ENCODE measurements at regions of chr7 and their contacts with region 1.

Region 1: DNA sequence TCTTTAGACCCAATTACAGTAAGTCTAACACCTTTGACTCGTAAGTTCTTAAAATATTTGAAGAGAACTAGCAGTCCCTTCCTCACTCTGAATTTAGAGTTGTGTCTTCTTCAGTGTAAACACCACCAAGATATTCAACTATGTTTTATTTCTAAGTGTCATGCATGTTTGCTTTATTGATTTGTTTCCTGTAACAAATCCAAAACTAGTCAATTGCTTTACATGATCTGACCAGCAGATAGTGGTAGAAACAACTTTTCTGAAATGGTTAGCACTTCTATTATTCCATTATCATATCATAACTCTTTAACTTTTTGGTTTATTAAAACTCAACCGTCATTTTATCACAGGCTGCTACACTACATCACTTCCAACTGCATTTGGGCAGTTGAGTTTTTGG is 90.1 kb downstream of the INHBA start:
- DNase-seq: no peak
- ATAC-seq: no peak
- H3K4me3 Mint-ChIP-seq: no peak overlapping the region
- H3K27ac Mint-ChIP-seq: no peak overlapping the region
- H3K4me1 Mint-ChIP-seq: peaks cover 15% of the 10 kb centered on the region
- H3K27me3 Mint-ChIP-seq: no peaks in the 10 kb centered on the region
- CTCF ChIP-seq: no peak

Region 2: GRCh38 chr7:41306486-41306885 is 306.3 kb before region 1 on chr7:
- CTCF ChIA-PET with region 1: no interaction called
- POLR2A ChIA-PET with region 1: no interaction called
- DNase-seq: no peak
- ATAC-seq: no peak
- H3K4me3 Mint-ChIP-seq: no peak overlapping the region
- H3K27ac Mint-ChIP-seq: no peak overlapping the region
- H3K4me1 Mint-ChIP-seq: peaks cover 1% of the 10 kb centered on the region
- H3K27me3 Mint-ChIP-seq: no peaks in the 10 kb centered on the region
- CTCF ChIP-seq: no peak

Region 3: GRCh38 chr7:41538810-41539724 is 73.7 kb before region 1 on chr7:
- CTCF ChIA-PET with region 1: no interaction called
- POLR2A ChIA-PET with region 1: no interaction called
- DNase-seq: no peak
- ATAC-seq: peak; percentile 90
- H3K4me3 Mint-ChIP-seq: peak overlapping the region; percentile 25
- H3K27ac Mint-ChIP-seq: peak overlapping the region; percentile 95
- H3K4me1 Mint-ChIP-seq: peaks cover 31% of the 10 kb centered on the region
- H3K27me3 Mint-ChIP-seq: peaks cover 3% of the 10 kb centered on the region; the same call in 1 of the 2 replicates
- CTCF ChIP-seq: no peak

Region 4: GRCh38 chr7:41584746-41585145 is 28.1 kb before region 1 on chr7:
- CTCF ChIA-PET with region 1: no interaction called
- POLR2A ChIA-PET with region 1: no interaction called
- DNase-seq: no peak
- ATAC-seq: no peak
- H3K4me3 Mint-ChIP-seq: no peak overlapping the region
- H3K27ac Mint-ChIP-seq: no peak overlapping the region
- H3K4me1 Mint-ChIP-seq: no peaks in the 10 kb centered on the region
- H3K27me3 Mint-ChIP-seq: no peaks in the 10 kb centered on the region
- CTCF ChIP-seq: no peak

Region 5: GRCh38 chr7:41599760-41600159 is 13.0 kb before region 1 on chr7:
- CTCF ChIA-PET with region 1: interaction called, 16 read pairs
- POLR2A ChIA-PET with region 1: no interaction called
- DNase-seq: peak; percentile 86
- ATAC-seq: peak; percentile 98
- H3K4me3 Mint-ChIP-seq: no peak overlapping the region
- H3K27ac Mint-ChIP-seq: no peak overlapping the region
- H3K4me1 Mint-ChIP-seq: peaks cover 2% of the 10 kb centered on the region; the same call in 1 of the 2 replicates
- H3K27me3 Mint-ChIP-seq: no peaks in the 10 kb centered on the region
- CTCF ChIP-seq: peak; percentile 85

Region 6: DNA sequence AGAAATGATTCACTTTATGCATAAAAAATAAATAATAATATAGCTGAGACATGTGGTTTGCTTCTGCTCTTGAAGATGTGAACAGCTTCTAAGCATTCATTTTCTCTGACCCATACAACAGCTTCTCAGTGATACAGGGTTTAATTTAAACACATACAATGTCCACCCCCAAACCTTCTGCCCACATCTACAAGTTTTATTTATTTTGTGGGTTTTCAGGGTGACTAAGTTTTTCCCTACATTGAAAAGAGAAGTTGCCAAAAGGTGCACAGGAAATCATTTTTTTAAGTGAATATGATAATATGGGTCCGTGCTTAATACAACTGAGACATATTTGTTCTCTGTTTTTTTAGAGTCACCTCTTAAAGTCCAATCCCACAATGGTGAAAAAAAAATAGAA is 72.9 kb after region 1 on chr7:
- CTCF ChIA-PET with region 1: no interaction called
- POLR2A ChIA-PET with region 1: interaction called, 10 read pairs
- DNase-seq: no peak
- ATAC-seq: no peak
- H3K4me3 Mint-ChIP-seq: no peak overlapping the region
- H3K27ac Mint-ChIP-seq: no peak overlapping the region
- H3K4me1 Mint-ChIP-seq: peaks cover 31% of the 10 kb centered on the region
- H3K27me3 Mint-ChIP-seq: no peaks in the 10 kb centered on the region
- CTCF ChIP-seq: no peak

Measured in WTC11 (cell line).